ENCODE measurements at regions of chr5 and their contacts with region 1.

Region 1: DNA sequence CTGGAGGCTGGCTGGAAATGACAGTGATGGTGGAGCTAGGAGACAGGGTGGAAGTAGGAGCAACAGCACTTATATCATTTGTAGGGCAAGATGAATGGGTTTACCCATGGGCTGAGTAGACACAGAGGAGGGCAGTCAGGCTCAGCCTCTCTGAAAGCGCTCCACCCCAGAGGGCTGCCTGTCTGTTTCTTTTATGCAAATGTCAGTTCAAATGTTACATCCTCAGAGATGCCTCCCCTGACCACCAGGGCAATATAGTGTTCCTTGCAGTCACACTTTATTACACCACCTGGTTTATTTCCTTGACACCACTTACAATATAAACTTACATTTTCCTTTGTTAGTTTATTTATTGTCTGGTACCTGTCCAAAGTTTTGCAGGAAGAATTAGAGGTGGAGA is 159.5 kb upstream of the IL12B start:
- DNase-seq: no peak
- ATAC-seq: no peak

Region 2: GRCh38 chr5:159531554-159532105 is 41.9 kb after region 1 on chr5:
- intact Hi-C with region 1: loop called (anchors 2 kb)
- DNase-seq: no peak
- ATAC-seq: no peak